ENCODE measurements at regions of chr15 and their contacts with region 1.

Region 1: DNA sequence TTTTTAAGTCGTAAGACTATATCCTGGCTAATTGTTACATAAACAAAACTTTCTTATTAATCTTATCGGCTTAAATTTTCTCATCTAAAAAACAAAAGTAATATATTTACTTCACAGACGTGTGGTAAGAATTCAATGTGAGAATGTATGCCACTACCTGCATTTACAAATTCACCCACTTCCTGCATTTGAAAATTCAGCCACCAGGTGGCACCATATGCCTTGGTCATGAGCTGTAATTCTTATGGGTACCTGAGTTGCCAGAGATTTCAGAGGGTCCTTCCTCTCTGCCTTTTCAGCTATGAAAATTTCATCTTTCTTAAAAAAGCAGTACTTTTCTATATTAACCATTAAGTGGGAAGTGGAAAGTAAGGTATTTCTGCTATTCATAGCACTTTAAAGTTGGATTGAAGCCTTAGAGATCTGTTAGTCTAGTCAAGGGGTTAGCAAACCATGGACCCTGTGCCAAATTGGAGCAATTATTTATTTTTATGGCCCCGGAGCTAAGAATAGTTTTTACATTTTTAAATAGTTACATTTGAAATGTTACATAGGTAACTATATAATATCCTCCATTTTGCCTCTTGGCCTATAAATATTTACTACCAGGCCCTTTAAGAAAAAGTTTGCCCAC is 127.8 kb downstream of the HCN4 start:
- DNase-seq: peak; percentile 30 to 72 (median 53)
- ATAC-seq: no peak
- H3K4me3 ChIP-seq: no peak overlapping the region
- H3K4me3 Mint-ChIP-seq: no peak overlapping the region
- H3K27ac ChIP-seq: no peak overlapping the region
- H3K27ac Mint-ChIP-seq: no peak overlapping the region
- H3K4me1 ChIP-seq: no peaks in the 10 kb centered on the region
- H3K4me1 Mint-ChIP-seq: peaks cover 0 to 6% (median 0%) of the 10 kb centered on the region in 7 donors
- H3K27me3 ChIP-seq: no peaks in the 10 kb centered on the region
- H3K27me3 Mint-ChIP-seq: no peaks in the 10 kb centered on the region

Region 2: DNA sequence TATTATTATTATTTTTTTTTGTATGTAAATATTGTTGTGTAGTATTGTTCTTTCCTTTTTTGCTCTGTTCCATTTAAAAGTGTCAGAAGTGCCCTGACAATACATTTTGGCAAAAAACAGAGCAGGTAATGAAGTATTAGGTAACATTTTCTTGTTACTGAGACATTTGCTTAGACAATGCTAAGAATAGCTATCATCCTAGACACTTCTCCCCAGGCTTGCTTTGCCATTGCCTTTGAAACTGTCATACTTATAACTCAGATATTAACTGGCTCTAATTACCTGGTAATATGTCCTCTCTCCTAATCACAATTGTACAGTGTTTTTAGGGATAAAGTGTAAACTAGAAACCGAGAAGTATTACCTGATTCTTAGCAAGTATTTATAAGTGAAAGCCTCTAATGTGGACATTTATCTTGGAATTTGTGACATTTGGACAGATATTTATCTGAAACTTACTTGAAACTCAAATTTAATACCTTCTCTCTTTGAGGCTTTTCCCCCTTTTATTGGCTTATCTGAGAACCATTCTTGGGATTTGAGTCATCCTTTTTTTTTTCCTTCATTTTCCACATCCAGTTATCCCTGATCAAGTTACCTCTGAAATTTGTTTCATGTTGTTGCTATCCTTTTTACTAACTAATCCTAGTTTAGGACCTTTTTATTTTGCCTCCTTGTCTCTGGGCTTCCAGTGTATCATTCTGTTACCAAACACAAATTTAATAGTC is 753.7 kb before region 1 on chr15:
- CTCF ChIA-PET with region 1: no interaction called
- POLR2A ChIA-PET with region 1: no interaction called
- intact Hi-C with region 1: no loop called
- DNase-seq: no peak
- ATAC-seq: no peak
- H3K4me3 ChIP-seq: no peak overlapping the region
- H3K4me3 Mint-ChIP-seq: peak overlapping the region in 7 of 10 donors; percentile 10 to 54 (median 20)
- H3K27ac ChIP-seq: no peak overlapping the region
- H3K27ac Mint-ChIP-seq: peak overlapping the region in 2 of 9 donors; percentile 33 to 48
- H3K4me1 ChIP-seq: peaks cover 36 to 37% of the 10 kb centered on the region in 2 donors
- H3K4me1 Mint-ChIP-seq: peaks cover 20 to 98% (median 87%) of the 10 kb centered on the region in 7 donors
- H3K27me3 ChIP-seq: no peaks in the 10 kb centered on the region
- H3K27me3 Mint-ChIP-seq: no peaks in the 10 kb centered on the region

Region 3: DNA sequence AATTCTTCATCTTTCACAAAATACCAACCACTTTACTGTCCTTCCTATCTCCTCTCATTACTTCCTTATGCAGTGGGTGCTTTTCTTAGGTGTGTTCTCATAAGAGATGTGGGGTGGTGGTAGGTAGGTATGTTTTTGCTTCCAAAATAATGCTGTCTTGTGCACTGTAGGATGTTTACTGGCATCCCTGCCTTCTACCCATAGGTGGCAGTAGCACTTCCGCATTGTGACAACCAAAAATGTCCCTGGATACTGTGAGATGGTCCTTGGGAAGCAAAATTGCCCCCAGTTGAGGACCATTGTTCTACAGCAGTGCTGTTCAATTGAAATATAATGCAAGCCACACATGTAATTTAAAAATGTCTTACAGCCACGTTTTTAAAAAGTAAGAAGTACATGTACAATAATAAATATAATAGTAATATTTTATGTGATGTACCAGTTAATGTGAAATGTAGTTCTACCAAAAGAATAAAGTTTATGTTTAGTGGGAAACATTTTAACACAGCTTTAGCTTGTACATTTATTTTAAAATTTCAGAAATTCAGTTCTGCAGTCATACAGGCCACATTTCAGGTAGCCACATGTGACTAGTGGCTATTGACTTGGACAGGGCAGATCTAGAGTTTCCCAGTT is 113.6 kb before region 1 on chr15:
- CTCF ChIA-PET with region 1: no interaction called
- POLR2A ChIA-PET with region 1: no interaction called
- intact Hi-C with region 1: no loop called
- DNase-seq: peak in 1 of 9 donors; percentile 5
- ATAC-seq: peak; percentile 61
- H3K4me3 ChIP-seq: no peak overlapping the region
- H3K4me3 Mint-ChIP-seq: no peak overlapping the region
- H3K27ac ChIP-seq: no peak overlapping the region
- H3K27ac Mint-ChIP-seq: no peak overlapping the region
- H3K4me1 ChIP-seq: no peaks in the 10 kb centered on the region
- H3K4me1 Mint-ChIP-seq: peaks cover 0 to 2% (median 0%) of the 10 kb centered on the region in 7 donors
- H3K27me3 ChIP-seq: no peaks in the 10 kb centered on the region
- H3K27me3 Mint-ChIP-seq: peaks cover 0 to 1% (median 0%) of the 10 kb centered on the region in 5 donors

Region 4: DNA sequence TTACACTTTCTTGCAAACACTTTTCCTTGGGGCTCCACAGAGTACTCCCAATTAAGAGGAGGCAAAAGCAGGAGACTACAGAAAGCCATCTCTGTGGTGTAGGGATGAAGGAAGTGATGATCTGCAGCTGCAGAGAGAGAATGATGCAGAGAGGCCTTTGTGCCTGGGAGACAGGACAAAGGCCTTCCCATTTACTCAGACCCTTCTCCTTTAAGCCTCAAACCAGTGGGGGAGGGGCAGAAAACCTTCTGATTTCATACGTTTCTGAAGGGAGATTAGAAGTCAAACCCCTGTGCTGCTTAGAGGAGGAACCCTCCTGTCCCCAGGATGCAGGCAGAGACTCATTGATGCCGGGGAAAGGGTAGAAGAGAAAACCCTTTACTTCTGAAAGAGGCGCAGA is 57.9 kb before region 1 on chr15:
- CTCF ChIA-PET with region 1: no interaction called
- POLR2A ChIA-PET with region 1: no interaction called
- intact Hi-C with region 1: no loop called
- DNase-seq: no peak
- ATAC-seq: no peak
- H3K4me3 ChIP-seq: no peak overlapping the region
- H3K4me3 Mint-ChIP-seq: no peak overlapping the region
- H3K27ac ChIP-seq: no peak overlapping the region
- H3K27ac Mint-ChIP-seq: peak overlapping the region in 1 of 9 donors; percentile 2
- H3K4me1 ChIP-seq: no peaks in the 10 kb centered on the region
- H3K4me1 Mint-ChIP-seq: no peaks in the 10 kb centered on the region
- H3K27me3 ChIP-seq: no peaks in the 10 kb centered on the region
- H3K27me3 Mint-ChIP-seq: no peaks in the 10 kb centered on the region

Region 5: GRCh38 chr15:73265536-73266153 is 24.7 kb after region 1 on chr15:
- CTCF ChIA-PET with region 1: interaction called, 6 read pairs
- POLR2A ChIA-PET with region 1: no interaction called
- intact Hi-C with region 1: loop called in 1 of 2 experiments (anchors 2 kb)
- DNase-seq: peak in 8 of 9 donors; percentile 8 to 46 (median 35)
- ATAC-seq: peak; percentile 73
- H3K4me3 ChIP-seq: no peak overlapping the region
- H3K4me3 Mint-ChIP-seq: no peak overlapping the region
- H3K27ac ChIP-seq: no peak overlapping the region
- H3K27ac Mint-ChIP-seq: peak overlapping the region in 1 of 9 donors; percentile 1
- H3K4me1 ChIP-seq: no peaks in the 10 kb centered on the region
- H3K4me1 Mint-ChIP-seq: peaks cover 0 to 4% (median 0%) of the 10 kb centered on the region in 7 donors
- H3K27me3 ChIP-seq: no peaks in the 10 kb centered on the region
- H3K27me3 Mint-ChIP-seq: no peaks in the 10 kb centered on the region

Region 6: GRCh38 chr15:73273181-73274002 is 32.4 kb after region 1 on chr15:
- CTCF ChIA-PET with region 1: interaction called, 7 read pairs
- POLR2A ChIA-PET with region 1: no interaction called
- intact Hi-C with region 1: loop called (anchors 1 kb)
- DNase-seq: peak in 7 of 9 donors; percentile 3 to 44 (median 32)
- ATAC-seq: peak; percentile 71
- H3K4me3 ChIP-seq: no peak overlapping the region
- H3K4me3 Mint-ChIP-seq: peak overlapping the region in 4 of 10 donors; percentile 4 to 63 (median 26)
- H3K27ac ChIP-seq: no peak overlapping the region
- H3K27ac Mint-ChIP-seq: no peak overlapping the region
- H3K4me1 ChIP-seq: no peaks in the 10 kb centered on the region
- H3K4me1 Mint-ChIP-seq: peaks cover 0 to 4% (median 0%) of the 10 kb centered on the region in 7 donors
- H3K27me3 ChIP-seq: no peaks in the 10 kb centered on the region
- H3K27me3 Mint-ChIP-seq: no peaks in the 10 kb centered on the region

Region 7: GRCh38 chr15:73331991-73332925 is 91.3 kb after region 1 on chr15:
- CTCF ChIA-PET with region 1: no interaction called
- POLR2A ChIA-PET with region 1: no interaction called
- intact Hi-C with region 1: no loop called
- DNase-seq: no peak
- ATAC-seq: no peak
- H3K4me3 ChIP-seq: no peak overlapping the region
- H3K4me3 Mint-ChIP-seq: no peak overlapping the region
- H3K27ac ChIP-seq: no peak overlapping the region
- H3K27ac Mint-ChIP-seq: no peak overlapping the region
- H3K4me1 ChIP-seq: no peaks in the 10 kb centered on the region
- H3K4me1 Mint-ChIP-seq: peaks cover 0 to 4% (median 0%) of the 10 kb centered on the region in 7 donors
- H3K27me3 ChIP-seq: no peaks in the 10 kb centered on the region
- H3K27me3 Mint-ChIP-seq: peaks cover 0 to 7% (median 4%) of the 10 kb centered on the region in 5 donors

Region 8: GRCh38 chr15:73697033-73697467 is 456.1 kb after region 1 on chr15:
- CTCF ChIA-PET with region 1: interaction called, 5 read pairs
- POLR2A ChIA-PET with region 1: no interaction called
- intact Hi-C with region 1: loop called (anchors 1 to 2 kb)
- DNase-seq: peak; percentile 34 to 80 (median 67)
- ATAC-seq: peak; percentile 93
- H3K4me3 ChIP-seq: no peak overlapping the region
- H3K4me3 Mint-ChIP-seq: peak overlapping the region in 8 of 10 donors; percentile 10 to 61 (median 44)
- H3K27ac ChIP-seq: no peak overlapping the region
- H3K27ac Mint-ChIP-seq: peak overlapping the region in 1 of 9 donors; percentile 74
- H3K4me1 ChIP-seq: peaks cover 8 to 18% of the 10 kb centered on the region in 2 donors
- H3K4me1 Mint-ChIP-seq: peaks cover 13 to 53% (median 18%) of the 10 kb centered on the region in 7 donors
- H3K27me3 ChIP-seq: peaks cover 3 to 8% of the 10 kb centered on the region in 2 donors
- H3K27me3 Mint-ChIP-seq: peaks cover 54 to 69% (median 65%) of the 10 kb centered on the region in 5 donors

Region 9: DNA sequence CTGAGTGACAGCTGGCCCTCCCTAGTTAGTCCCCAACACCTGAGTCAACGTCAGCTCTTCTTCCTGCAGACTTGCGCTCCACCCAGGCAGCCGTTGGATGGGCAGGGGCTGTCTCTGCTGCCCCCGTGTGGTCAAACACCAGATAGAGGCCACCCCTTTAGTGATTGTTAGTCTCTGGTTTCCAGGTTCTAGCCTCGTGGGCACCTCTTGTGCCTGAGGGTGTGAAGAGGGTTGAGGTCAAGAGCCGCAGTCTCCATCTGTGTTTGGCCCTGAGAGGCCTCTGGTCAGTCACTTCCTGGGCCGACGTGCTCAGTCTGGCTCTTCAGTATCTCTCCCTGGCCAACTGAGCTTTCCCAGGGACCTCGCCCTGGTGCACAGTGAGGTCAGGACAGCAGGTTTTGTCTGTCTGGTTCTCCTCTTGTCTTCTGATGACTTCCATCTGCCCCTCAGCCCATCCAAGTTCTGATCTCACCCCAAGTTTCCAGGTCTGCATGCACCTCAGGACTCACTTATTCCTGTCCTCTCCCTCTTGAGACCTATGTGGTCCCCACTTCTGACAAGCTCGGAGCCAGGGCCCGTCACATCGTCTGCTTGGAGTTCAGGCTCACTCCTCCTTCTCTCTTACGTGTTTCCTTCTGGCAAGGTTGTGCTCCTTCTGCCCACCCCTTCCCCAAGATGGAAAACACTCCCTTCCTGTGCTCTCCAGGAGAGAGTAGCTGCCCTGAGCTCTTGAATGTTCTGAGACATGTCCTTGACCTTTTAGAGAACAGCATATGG is 464.1 kb after region 1 on chr15:
- CTCF ChIA-PET with region 1: interaction called, 5 read pairs
- POLR2A ChIA-PET with region 1: no interaction called
- intact Hi-C with region 1: loop called (anchors 1 kb)
- DNase-seq: peak in 8 of 9 donors; percentile 38 to 67 (median 46)
- ATAC-seq: peak; percentile 78
- H3K4me3 ChIP-seq: no peak overlapping the region
- H3K4me3 Mint-ChIP-seq: no peak overlapping the region
- H3K27ac ChIP-seq: no peak overlapping the region
- H3K27ac Mint-ChIP-seq: no peak overlapping the region
- H3K4me1 ChIP-seq: no peaks in the 10 kb centered on the region
- H3K4me1 Mint-ChIP-seq: peaks cover 0 to 8% (median 0%) of the 10 kb centered on the region in 7 donors
- H3K27me3 ChIP-seq: no peaks in the 10 kb centered on the region
- H3K27me3 Mint-ChIP-seq: peaks cover 9 to 26% (median 19%) of the 10 kb centered on the region in 5 donors